Prostate gland (tissue), 2 donors: ENCODE measurements at regions of chr2 and their contacts with region 1.

Region 1: GRCh38 chr2:95165129-95166064 is at the start of gene ZNF2:
- DNase-seq: peak; percentile 98
- H3K4me3 ChIP-seq: peak within 1 kb of the TSS; percentile 64 to 81
- H3K27ac ChIP-seq: peak within 1 kb of the TSS; percentile 84 to 91
- H3K4me1 ChIP-seq: peaks cover 3% of the 10 kb centered on the region
- H3K27me3 ChIP-seq: no peaks in the 10 kb centered on the region
- CTCF ChIP-seq: peak in 2 of 4 experiments; percentile 24 to 37
- POLR2A ChIP-seq: peak; percentile 54
- total RNA-seq, gene ZNF2: 6.2 to 7.1 TPM

Region 2: GRCh38 chr2:95007822-95008221 is 157.6 kb before region 1 on chr2:
- intact Hi-C with region 1: no loop called
- DNase-seq: no peak
- H3K4me3 ChIP-seq: no peak overlapping the region
- H3K27ac ChIP-seq: no peak overlapping the region
- H3K4me1 ChIP-seq: no peaks in the 10 kb centered on the region
- H3K27me3 ChIP-seq: no peaks in the 10 kb centered on the region
- CTCF ChIP-seq: no peak
- POLR2A ChIP-seq: no peak

Region 3: DNA sequence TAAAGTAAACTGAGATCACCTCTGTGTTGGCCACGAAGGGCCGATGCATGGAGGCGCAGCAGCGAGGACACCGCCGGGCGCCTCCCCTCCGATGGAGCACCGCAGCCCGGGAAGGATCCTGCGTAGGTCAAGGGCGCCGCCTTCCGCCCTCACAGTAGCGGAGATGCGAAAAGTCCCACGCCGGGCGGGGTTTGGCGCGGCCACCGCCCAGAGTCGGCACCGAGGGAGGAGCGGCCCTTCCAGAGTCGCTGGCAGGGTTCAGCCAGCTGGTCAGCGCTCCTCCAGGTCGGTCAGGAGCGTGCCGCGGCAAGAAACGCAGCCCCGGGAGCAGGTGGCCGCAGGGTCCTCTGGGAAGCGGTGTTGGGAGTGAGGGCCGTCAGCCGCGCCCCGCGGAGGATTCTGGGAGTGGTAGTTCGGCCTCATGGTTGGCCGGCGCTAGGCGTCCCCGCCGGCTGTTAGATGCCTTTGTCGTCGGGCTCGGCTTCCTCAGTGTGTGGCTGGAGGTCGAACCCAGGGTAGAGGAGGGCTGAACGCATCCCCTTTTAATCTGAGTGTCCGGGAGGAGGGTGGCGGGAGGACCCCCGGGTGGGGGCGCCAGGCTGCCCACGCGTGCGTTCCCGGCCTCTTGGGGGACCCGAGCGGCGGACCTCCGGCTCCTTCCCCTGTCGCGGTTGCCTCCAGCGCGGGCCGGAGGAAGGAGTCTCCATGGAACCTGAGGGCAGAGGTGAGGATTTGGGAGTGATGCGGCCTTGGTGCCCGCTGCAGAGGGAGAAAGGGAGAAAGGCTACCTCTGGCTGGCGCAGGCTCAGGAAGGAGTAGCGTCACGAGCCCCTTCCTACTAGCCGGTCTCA is 41.9 kb after region 1 on chr2 and contains the start of gene ZNF892:
- intact Hi-C with region 1: loop called (anchors 5 kb)
- DNase-seq: peak; percentile 92
- H3K4me3 ChIP-seq: peak within 1 kb of the TSS; percentile 53 to 56
- H3K27ac ChIP-seq: peak within 1 kb of the TSS; percentile 74 to 80
- H3K4me1 ChIP-seq: no peaks in the 10 kb centered on the region
- H3K27me3 ChIP-seq: no peaks in the 10 kb centered on the region
- CTCF ChIP-seq: peak in 3 of 4 experiments; percentile 38 to 57 (median 46)
- POLR2A ChIP-seq: peak; percentile 34
- total RNA-seq, gene ZNF892: 4.6 to 4.8 TPM